Endothelial cell of umbilical vein (primary cell): ENCODE measurements at regions of chr6 and their contacts with region 1.

Region 1: DNA sequence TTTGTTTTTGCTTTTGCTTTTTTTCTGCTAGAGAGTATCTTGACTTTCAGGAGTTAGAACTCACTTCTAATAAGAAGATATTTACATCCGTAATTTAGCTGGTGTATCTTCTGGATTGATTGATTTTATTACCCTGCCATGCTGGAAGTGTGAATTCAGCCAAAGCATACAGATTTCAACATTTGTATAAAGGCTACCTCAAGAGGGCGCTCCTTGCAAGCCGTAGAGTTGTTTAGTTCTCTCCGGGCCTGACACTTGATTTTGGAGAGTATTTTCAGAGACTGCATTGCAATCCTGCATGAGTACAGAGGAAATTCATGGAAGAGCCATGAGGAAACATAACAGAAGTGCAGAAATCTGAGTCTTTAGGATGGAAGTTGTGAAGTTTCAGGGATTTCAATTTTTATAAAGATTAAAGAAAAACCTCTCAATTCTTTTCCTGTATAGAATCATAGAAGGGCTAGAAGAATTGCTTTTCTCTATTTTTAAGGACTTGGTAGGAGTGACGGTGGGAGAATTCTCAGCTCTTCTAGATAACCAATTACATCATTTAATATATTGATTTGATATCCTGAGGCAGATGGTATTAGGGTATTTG is 66.7 kb upstream of the TIAM2 start:
- DNase-seq: peak; percentile 76
- H3K4me3 ChIP-seq: no peak overlapping the region
- H3K27ac ChIP-seq: no peak overlapping the region
- H3K4me1 ChIP-seq: peaks cover 13% of the 10 kb centered on the region
- H3K27me3 ChIP-seq: no peaks in the 10 kb centered on the region
- CTCF ChIP-seq: peak; percentile 65 to 73
- POLR2A ChIP-seq: no peak

Region 2: GRCh38 chr6:154548130-154548830 is 380.1 kb before region 1 on chr6:
- CTCF ChIA-PET with region 1: no interaction called
- POLR2A ChIA-PET with region 1: no interaction called
- dilution Hi-C with region 1: no loop called
- intact Hi-C with region 1: no loop called
- DNase-seq: peak; percentile 92
- H3K4me3 ChIP-seq: no peak overlapping the region
- H3K27ac ChIP-seq: no peak overlapping the region
- H3K4me1 ChIP-seq: peaks cover 8% of the 10 kb centered on the region
- H3K27me3 ChIP-seq: no peaks in the 10 kb centered on the region
- CTCF ChIP-seq: no peak
- POLR2A ChIP-seq: no peak

Region 3: GRCh38 chr6:154749341-154749740 is 179.1 kb before region 1 on chr6:
- CTCF ChIA-PET with region 1: no interaction called
- POLR2A ChIA-PET with region 1: no interaction called
- dilution Hi-C with region 1: no loop called
- intact Hi-C with region 1: no loop called
- DNase-seq: no peak
- H3K4me3 ChIP-seq: no peak overlapping the region
- H3K27ac ChIP-seq: no peak overlapping the region
- H3K4me1 ChIP-seq: peaks cover 4% of the 10 kb centered on the region
- H3K27me3 ChIP-seq: no peaks in the 10 kb centered on the region
- CTCF ChIP-seq: no peak
- POLR2A ChIP-seq: no peak

Region 4: DNA sequence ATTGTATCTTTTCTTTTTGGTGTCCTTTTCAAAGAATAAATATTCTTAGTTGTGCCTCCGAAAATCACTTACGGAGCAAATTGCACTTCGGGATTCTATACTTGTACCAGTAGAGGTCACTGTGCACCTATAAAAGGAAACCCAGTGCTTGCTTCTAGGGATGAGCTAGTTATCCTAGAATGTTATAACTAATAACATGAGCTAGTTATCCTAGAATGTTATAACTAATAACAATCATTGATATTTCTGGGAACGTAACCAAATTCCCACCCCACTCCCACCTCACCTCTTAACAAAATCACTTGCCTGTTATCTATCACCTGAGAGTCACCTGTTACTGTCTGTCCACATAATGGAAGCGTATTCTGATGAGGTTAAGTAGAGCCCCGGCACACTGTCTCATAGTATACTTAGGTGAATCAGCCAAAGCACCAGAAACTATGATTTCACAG is 60.3 kb before region 1 on chr6:
- CTCF ChIA-PET with region 1: interaction called, 44 read pairs
- POLR2A ChIA-PET with region 1: no interaction called
- dilution Hi-C with region 1: no loop called
- intact Hi-C with region 1: loop called (anchors 1 kb)
- DNase-seq: peak; percentile 57
- H3K4me3 ChIP-seq: no peak overlapping the region
- H3K27ac ChIP-seq: no peak overlapping the region
- H3K4me1 ChIP-seq: no peaks in the 10 kb centered on the region
- H3K27me3 ChIP-seq: no peaks in the 10 kb centered on the region
- CTCF ChIP-seq: peak; percentile 53 to 54
- POLR2A ChIP-seq: no peak

Region 5: GRCh38 chr6:154951345-154952200 is 23.1 kb after region 1 on chr6:
- CTCF ChIA-PET with region 1: interaction called, 10 read pairs
- POLR2A ChIA-PET with region 1: no interaction called
- dilution Hi-C with region 1: no loop called
- intact Hi-C with region 1: no loop called
- DNase-seq: no peak
- H3K4me3 ChIP-seq: no peak overlapping the region
- H3K27ac ChIP-seq: no peak overlapping the region
- H3K4me1 ChIP-seq: no peaks in the 10 kb centered on the region
- H3K27me3 ChIP-seq: no peaks in the 10 kb centered on the region
- CTCF ChIP-seq: no peak
- POLR2A ChIP-seq: no peak

Region 6: GRCh38 chr6:154995284-154996015 is 67.0 kb after region 1 on chr6 and contains the start of gene TIAM2:
- CTCF ChIA-PET with region 1: interaction called, 4 read pairs
- POLR2A ChIA-PET with region 1: no interaction called
- dilution Hi-C with region 1: no loop called
- intact Hi-C with region 1: loop called (anchors 2 kb)
- DNase-seq: no peak
- H3K4me3 ChIP-seq: peak within 1 kb of the TSS; percentile 77 to 96 (median 86)
- H3K27ac ChIP-seq: no peak within 1 kb of the TSS
- H3K4me1 ChIP-seq: peaks cover 6% of the 10 kb centered on the region
- H3K27me3 ChIP-seq: no peaks in the 10 kb centered on the region
- CTCF ChIP-seq: no peak
- POLR2A ChIP-seq: no peak
- total RNA-seq, gene TIAM2: 13.5 and 18.5 TPM in 2 replicates

Region 7: DNA sequence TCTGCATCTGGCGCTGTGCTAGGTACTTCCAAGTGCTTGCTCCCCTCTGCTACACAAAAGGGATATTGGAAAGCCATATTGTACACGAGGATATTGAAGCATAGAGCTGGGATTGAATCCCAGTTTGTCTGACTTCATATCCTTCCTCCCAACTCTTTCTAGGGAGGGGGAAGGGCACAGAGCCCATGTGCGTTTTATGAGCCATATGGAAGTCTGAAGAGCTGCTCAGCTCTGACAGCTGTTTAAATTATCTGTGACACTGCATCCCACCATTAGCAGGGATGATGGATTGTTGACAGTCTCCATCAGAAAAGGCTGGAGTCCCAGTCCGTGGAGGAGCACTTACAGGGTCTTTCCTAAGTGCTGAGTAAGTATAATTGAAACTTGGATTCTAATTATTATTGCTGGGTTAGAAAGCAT is 85.0 kb after region 1 on chr6:
- CTCF ChIA-PET with region 1: interaction called, 4 read pairs
- POLR2A ChIA-PET with region 1: no interaction called
- dilution Hi-C with region 1: no loop called
- intact Hi-C with region 1: loop called (anchors 5 kb)
- DNase-seq: peak; percentile 89
- H3K4me3 ChIP-seq: peak overlapping the region in 2 of 3 experiments; percentile 39 to 65
- H3K27ac ChIP-seq: peak overlapping the region; percentile 41
- H3K4me1 ChIP-seq: peaks cover 25% of the 10 kb centered on the region
- H3K27me3 ChIP-seq: no peaks in the 10 kb centered on the region
- CTCF ChIP-seq: no peak
- POLR2A ChIP-seq: no peak